Ascending aorta (tissue), 2 donors: ENCODE measurements at regions of chr17 and their contacts with region 1.

Region 1: DNA sequence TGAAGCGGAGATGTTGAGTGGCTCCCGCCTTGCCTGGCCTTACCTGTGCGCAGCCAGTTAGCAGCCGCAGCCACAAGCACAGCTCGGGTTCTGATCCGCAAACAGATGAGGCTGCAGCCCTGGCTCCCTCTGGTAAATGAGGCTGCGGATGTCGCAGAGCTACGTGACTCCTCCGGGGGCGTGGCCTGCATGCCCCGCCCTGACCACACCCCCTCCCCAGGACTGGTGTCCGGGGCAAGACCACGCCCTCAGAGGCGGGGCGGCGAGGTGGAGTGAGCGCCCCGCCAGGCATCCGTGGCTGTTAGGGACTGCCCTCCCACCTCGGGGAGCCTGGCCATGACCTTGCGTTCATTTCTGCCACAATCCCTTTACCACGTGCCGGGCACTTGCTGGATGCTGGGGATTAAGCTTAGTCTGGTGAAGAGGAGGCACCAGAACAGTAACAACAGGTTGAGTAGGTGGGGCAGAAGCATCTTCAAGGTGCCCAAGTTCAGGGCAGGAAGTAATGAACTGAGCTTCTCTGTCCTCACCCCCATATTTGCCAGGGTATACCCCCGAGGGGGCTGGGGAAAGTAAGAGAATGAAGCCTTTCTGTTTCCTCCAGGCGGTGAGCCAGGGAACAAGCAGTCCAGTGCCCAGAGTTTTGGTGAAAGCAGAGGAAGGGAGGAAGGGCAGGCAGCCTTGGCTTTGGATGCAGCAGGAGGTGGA is at the start of gene ALDOC:
- DNase-seq: peak; percentile 90 to 98
- H3K4me3 ChIP-seq: peak within 1 kb of the TSS; percentile 47 to 58
- H3K27ac ChIP-seq: peak within 1 kb of the TSS; percentile 29 to 38
- H3K4me1 ChIP-seq: peaks cover 0 to 14% of the 10 kb centered on the region in 2 donors
- H3K27me3 ChIP-seq: no peaks in the 10 kb centered on the region
- CTCF ChIP-seq: no peak
- total RNA-seq, gene ALDOC: 24.8 TPM

Region 2: DNA sequence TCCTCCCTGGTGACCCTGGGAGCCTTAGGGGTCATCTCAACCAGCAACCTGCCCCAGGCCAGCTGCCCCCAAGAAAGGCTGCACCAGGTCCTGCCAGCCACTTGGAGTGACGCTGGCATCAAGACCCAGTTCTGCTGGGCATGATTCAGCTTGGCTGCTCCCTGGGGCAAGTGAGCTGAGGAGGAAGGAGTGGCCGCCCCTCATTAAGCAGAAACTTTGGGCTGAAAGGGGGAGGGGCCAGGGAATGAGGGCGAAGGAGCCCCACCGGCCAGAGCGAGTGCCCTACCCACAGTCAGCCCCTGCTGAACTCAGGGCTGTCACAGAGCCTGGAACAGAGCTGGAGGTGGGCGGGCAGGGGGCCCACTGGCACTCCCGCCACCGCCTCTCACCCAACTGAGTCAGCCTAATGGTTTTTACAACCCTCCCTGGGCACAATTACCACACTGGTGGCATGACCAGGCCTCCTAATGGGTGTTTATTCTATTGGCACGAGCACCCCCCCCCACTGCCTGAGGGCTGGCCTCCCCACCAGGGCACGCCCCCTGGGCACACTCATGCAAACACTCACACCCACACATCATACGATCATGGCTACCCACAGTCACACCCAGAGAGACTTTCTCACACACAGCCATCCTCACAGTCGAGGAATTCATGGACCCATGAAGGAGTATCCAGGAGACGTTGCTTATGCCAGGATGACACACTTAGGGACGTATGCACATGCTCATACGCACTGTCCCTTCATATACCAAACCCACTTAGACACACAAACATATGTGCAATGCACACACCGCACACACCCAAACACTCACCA is 43.7 kb before region 1 on chr17:
- intact Hi-C with region 1: no loop called
- DNase-seq: no peak
- H3K4me3 ChIP-seq: no peak overlapping the region
- H3K27ac ChIP-seq: no peak overlapping the region
- H3K4me1 ChIP-seq: no peaks in the 10 kb centered on the region
- H3K27me3 ChIP-seq: no peaks in the 10 kb centered on the region
- CTCF ChIP-seq: no peak

Region 3: GRCh38 chr17:28598799-28599310 is 21.9 kb after region 1 on chr17 and contains the start of gene SPAG5:
- intact Hi-C with region 1: loop called (anchors 1 kb)
- DNase-seq: peak; percentile 81 to 97
- H3K4me3 ChIP-seq: peak within 1 kb of the TSS; percentile 85 to 86
- H3K27ac ChIP-seq: peak within 1 kb of the TSS; percentile 99 to 100
- H3K4me1 ChIP-seq: peaks cover 4 to 6% of the 10 kb centered on the region in 2 donors
- H3K27me3 ChIP-seq: no peaks in the 10 kb centered on the region
- CTCF ChIP-seq: no peak
- total RNA-seq, gene SPAG5: 1.6 TPM

Region 4: DNA sequence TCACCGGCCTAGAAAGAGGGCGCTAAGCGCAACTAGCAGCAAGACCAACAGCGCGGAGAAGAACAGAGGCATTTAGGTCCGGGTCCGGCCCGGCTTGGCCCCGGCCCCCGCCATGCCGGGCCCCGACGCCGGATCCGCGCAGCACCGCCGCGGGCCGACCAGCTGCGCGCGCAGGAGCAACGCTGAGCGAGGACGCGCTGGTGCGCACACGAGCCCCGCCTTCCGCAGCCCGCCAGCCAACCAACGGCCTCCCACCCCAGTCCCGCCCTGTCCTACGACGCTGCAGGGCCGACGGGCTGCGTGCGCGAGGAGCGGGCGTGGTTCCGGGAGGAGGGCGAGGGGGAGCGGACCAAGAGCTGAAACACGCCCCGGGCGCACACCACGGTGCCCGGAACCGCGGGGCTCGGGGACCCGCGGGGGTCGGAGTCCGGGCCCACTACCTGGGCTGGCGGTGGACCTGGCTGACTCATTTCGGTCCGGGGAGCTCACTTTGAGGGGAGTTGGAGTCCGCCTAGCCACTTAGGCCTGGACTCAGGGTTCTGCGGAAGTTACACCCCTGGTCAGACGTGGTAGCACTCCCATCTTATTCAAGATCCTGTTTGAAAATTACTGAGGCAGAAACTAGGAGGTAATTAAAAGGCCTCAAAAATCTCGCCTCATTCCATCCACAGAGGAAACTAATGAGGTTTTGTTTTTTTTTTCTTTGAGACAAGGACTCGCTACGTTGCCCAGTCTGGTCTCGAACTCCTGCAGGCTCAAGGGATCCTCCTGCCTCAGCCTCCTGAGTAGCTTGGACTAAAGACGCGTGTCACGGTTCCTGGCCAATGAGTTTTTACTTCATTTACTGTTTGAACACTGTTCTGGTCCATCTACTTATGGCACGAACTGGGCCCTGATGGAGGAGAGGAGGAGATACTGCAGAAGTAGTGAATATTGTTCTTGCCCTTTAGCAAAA is 68.3 kb after region 1 on chr17 and contains the start of gene BLTP2:
- intact Hi-C with region 1: loop called (anchors 2 kb)
- DNase-seq: peak; percentile 81 to 97
- H3K4me3 ChIP-seq: peak within 1 kb of the TSS; percentile 91 to 95
- H3K27ac ChIP-seq: peak within 1 kb of the TSS; percentile 93 to 94
- H3K4me1 ChIP-seq: peaks cover 5 to 27% of the 10 kb centered on the region in 2 donors
- H3K27me3 ChIP-seq: no peaks in the 10 kb centered on the region
- CTCF ChIP-seq: no peak
- total RNA-seq, gene BLTP2: 104 TPM